Activated CD4-positive, alpha-beta T cell treated with anti-CD3 and anti-CD28 coated beads for 36 hours (primary cell): ENCODE measurements at regions of chr4 and their contacts with region 1.

Region 1: GRCh38 chr4:39032218-39033085 is at the start of gene TMEM156:
- DNase-seq: peak; percentile 68
- ATAC-seq: peak; percentile 87
- H3K4me3 Mint-ChIP-seq: peak within 1 kb of the TSS; percentile 77
- H3K27ac Mint-ChIP-seq: peak within 1 kb of the TSS; percentile 88
- H3K4me1 Mint-ChIP-seq: peaks cover 46% of the 10 kb centered on the region
- H3K27me3 Mint-ChIP-seq: no peaks in the 10 kb centered on the region
- total RNA-seq, gene TMEM156: 14.3 to 15.4 TPM

Region 2: DNA sequence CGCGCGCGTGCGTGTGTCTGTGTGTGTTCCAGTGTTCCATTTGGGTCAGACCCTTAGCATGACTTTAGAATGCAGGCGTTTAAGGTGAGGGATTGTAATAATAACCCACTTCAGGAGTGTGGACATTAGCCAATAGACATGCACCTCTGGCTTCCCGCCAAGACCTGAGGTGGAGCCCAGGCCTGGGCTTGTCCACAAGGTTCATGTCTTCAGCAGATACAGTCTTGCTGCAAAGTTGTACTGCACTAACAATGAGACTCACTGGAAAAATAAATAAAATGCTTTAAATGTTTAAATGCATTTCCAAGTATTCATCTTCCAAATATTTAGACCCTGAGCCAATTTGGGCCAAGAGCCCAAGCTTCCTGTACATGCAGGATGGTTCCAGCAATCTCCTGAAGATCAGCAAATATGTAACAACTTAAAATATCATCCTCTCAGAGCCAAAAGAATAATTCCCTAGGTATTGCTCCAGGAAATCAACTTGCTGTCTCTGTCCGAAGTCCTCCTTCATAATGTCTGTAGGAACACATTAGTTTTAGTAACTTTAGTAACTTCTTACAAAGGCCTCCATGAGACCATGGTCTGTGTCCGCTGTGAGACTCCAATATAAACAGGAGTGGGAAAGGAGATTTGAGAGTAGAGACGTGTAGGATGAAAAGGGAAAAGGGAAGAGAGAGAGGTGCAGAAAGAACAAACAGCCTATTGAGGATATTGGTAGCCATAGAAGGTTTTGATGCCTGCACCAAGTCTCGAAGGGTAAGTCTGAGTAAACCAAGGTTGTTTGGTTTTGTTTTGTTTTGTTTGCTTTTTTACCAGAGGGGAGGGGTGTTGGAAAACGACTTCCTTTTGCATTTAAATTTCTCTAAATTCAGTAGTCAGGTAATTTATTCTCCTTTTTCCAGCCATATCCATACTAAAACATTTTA is 466.9 kb before region 1 on chr4:
- CTCF ChIA-PET with region 1: no interaction called
- POLR2A ChIA-PET with region 1: no interaction called
- intact Hi-C with region 1: no loop called
- DNase-seq: no peak
- ATAC-seq: no peak
- H3K4me3 Mint-ChIP-seq: no peak overlapping the region
- H3K27ac Mint-ChIP-seq: no peak overlapping the region
- H3K4me1 Mint-ChIP-seq: peaks cover 18% of the 10 kb centered on the region
- H3K27me3 Mint-ChIP-seq: peaks cover 6% of the 10 kb centered on the region

Region 3: GRCh38 chr4:38663801-38664705 is 368.4 kb before region 1 on chr4 and contains the start of gene KLF3:
- CTCF ChIA-PET with region 1: no interaction called
- POLR2A ChIA-PET with region 1: no interaction called
- intact Hi-C with region 1: loop called in 1 of 2 experiments (anchors 5 kb)
- DNase-seq: peak; percentile 84
- ATAC-seq: peak; percentile 62
- H3K4me3 Mint-ChIP-seq: peak within 1 kb of the TSS; percentile 88
- H3K27ac Mint-ChIP-seq: peak within 1 kb of the TSS; percentile 78
- H3K4me1 Mint-ChIP-seq: peaks cover 61% of the 10 kb centered on the region
- H3K27me3 Mint-ChIP-seq: no peaks in the 10 kb centered on the region
- total RNA-seq, gene KLF3: 6.1 to 6.2 TPM

Region 4: GRCh38 chr4:38902695-38903094 is 129.8 kb before region 1 on chr4:
- CTCF ChIA-PET with region 1: interaction called, 12 read pairs
- POLR2A ChIA-PET with region 1: interaction called, 3 read pairs
- intact Hi-C with region 1: loop called in 1 of 2 experiments (anchors 2 kb)
- DNase-seq: no peak
- ATAC-seq: peak; percentile 88
- H3K4me3 Mint-ChIP-seq: no peak overlapping the region
- H3K27ac Mint-ChIP-seq: no peak overlapping the region
- H3K4me1 Mint-ChIP-seq: peaks cover 3% of the 10 kb centered on the region
- H3K27me3 Mint-ChIP-seq: no peaks in the 10 kb centered on the region

Region 5: DNA sequence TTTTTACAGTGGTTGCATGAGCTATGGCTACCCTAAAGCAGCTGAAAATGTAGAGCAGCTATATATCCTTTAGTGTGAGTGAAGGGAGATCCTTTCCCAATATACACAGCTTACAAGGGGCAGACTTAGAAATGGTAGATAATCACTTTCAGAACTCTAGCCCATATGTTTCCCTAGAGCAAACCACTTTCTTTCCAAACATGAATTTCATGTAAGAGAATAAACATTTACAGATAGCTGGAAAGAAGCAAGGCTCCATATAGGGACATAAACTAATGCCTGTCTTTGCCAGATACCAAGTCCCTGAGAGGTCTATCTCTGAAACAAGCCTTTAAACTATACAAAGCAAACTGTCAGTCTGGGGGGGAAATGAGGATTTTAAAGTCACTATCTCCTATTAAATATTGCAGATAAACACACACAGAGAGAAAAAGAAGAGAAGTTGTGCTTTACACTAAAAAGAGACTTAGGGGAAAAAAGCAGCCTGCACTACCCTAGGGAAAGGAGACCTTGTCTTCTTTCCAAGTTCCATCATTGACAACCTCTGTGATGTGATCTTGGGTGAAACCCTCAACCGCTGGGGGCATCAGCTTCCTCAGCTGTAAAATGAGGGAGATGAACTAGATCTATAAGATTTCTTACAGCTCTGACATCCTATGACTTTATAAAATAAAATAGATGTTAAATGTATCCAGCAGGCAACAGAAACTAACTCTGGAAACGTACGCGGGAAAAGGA is 73.8 kb before region 1 on chr4:
- CTCF ChIA-PET with region 1: no interaction called
- POLR2A ChIA-PET with region 1: no interaction called
- intact Hi-C with region 1: loop called (anchors 2 to 5 kb)
- DNase-seq: no peak
- ATAC-seq: peak; percentile 57
- H3K4me3 Mint-ChIP-seq: no peak overlapping the region
- H3K27ac Mint-ChIP-seq: peak overlapping the region; percentile 84
- H3K4me1 Mint-ChIP-seq: peaks cover 33% of the 10 kb centered on the region
- H3K27me3 Mint-ChIP-seq: no peaks in the 10 kb centered on the region

Region 6: GRCh38 chr4:39044364-39044955 is 12.0 kb after region 1 on chr4:
- CTCF ChIA-PET with region 1: interaction called, 7 read pairs
- POLR2A ChIA-PET with region 1: interaction called, 3 read pairs
- intact Hi-C with region 1: loop called (anchors 1 kb)
- DNase-seq: peak; percentile 99
- ATAC-seq: peak; percentile 87
- H3K4me3 Mint-ChIP-seq: peak overlapping the region; percentile 76
- H3K27ac Mint-ChIP-seq: peak overlapping the region; percentile 69
- H3K4me1 Mint-ChIP-seq: peaks cover 48% of the 10 kb centered on the region
- H3K27me3 Mint-ChIP-seq: no peaks in the 10 kb centered on the region

Region 7: GRCh38 chr4:39118034-39118658 is 85.7 kb after region 1 on chr4:
- CTCF ChIA-PET with region 1: no interaction called
- POLR2A ChIA-PET with region 1: no interaction called
- intact Hi-C with region 1: no loop called
- DNase-seq: peak; percentile 46
- ATAC-seq: peak; percentile 80
- H3K4me3 Mint-ChIP-seq: peak overlapping the region; percentile 35
- H3K27ac Mint-ChIP-seq: peak overlapping the region; percentile 68
- H3K4me1 Mint-ChIP-seq: peaks cover 21% of the 10 kb centered on the region
- H3K27me3 Mint-ChIP-seq: no peaks in the 10 kb centered on the region